Head of caudate nucleus (tissue), 42 donors: ENCODE measurements at regions of chr1 and their contacts with region 1.

Region 1: GRCh38 chr1:42924082-42924850 is 34.4 kb downstream of the SLC2A1 start:
- DNase-seq: peak; percentile 93 to 99 (median 98)

Region 2: DNA sequence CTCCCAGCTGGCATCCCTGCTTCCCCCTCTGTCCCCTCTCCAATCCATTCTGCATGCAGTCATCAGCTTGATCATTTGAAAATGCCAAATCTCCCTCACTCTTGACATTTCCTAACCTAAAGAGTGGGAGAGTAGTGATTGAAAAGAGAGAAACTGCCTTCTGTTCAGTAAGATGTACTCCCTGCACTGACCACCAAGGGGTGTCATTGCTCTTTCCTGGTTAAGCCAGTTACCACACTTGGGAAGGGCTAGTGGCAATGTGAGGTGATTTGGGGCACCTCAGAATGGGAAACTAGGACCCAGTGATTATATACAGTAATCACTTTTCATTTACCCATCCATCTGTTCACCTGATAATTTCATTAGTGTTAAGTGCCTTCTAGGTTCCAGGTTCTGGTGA is 146.4 kb before region 1 on chr1:
- intact Hi-C with region 1: loop called (anchors 10 kb)
- DNase-seq: peak in 32 of 42 donors; percentile 13 to 77 (median 48)

Region 3: DNA sequence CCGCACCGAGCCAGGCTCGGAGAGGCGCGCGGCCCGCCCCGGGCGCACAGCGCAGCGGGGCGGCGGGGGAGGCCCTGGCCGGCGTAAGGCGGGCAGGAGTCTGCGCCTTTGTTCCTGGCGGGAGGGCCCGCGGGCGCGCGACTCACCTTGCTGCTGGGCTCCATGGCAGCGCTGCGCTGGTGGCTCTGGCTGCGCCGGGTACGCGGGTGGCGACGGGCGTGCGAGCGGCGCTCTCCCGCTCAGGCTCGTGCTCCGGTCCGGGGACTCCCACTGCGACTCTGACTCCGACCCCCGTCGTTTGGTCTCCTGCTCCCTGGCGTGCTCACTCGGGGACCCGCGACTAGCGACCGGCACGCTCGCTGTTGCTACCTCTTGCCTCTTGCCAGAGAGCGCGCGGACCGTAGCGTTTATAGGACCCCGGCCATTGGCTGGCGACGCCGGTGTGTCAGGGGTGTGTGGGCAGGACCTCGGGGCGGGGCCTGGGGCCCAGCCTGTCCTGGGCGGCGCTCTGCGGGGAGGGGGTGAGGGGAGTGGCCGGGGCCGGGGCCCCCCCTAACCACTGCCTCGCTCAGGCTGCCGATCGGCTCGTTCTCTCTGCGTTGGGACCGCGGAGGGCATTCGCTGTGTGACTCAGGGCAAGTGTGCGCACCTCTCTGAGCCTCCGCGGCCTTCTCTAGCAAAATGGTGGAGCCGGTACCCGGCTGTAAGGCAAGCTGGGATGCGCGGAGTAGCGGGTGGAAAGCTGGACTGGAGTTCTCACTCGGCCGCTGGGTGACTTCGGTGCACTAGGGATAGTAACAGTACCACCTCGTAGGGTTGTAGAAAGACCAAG is 34.4 kb after region 1 on chr1 and contains the start of gene SLC2A1:
- intact Hi-C with region 1: loop called (anchors 5 kb)
- DNase-seq: peak; percentile 93 to 99 (median 97)